BJ (cell line): ENCODE measurements at regions of chr3 and their contacts with region 1.

Region 1: DNA sequence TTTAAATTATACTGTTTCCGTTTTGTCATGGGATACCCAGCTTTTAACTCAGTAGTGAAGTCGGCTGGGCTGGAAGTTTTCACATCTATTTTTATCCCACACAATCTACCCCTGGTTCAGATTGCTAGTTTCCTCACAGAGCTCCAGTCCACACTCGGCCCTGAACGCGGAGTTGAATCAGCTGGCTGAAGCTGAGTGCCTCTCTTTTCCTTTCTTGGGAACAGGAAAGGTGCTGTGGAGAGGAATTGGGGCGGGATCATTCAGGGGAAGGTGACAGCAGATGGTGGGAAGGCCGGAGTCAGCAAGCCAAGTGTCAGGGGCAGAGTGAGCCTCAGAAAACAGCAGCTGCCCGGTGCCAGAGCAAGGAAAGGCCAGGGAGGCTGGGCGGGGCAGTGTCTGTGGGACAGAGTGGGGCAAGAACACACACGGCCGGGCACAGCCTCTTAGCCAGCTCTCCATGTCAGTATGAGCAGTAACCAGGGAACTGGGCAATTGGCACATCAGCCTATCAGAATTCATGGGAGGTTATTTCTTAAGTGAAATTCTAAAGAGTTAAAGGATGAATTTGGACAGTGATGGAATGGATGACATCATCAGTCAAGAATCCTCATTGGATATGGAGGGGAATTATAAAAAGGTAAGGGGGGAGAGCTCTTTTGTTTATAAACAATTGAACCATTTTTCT is 135.7 kb upstream of the IL12A start:
- DNase-seq: no peak
- H3K4me3 ChIP-seq: peak overlapping the region; percentile 26
- H3K27me3 ChIP-seq: no peaks in the 10 kb centered on the region
- CTCF ChIP-seq: no peak

Region 2: DNA sequence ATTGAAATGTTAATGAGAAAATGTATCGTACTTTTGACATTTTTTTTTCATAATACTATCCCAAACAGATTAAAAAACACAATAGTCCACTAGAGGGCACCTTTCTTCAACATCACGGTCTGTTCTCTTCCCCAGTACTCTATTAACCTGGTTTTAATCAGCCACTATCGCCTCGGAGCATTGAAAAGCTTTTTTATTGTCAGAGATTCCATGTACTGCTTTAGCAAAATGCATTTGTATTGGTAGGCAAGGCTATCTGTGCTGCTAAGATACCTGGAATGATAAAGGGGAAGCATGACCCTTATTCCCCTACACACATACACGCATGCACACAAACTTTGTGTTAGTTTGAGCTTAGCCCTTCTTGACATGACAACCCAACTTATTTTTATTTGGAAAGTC is 24.4 kb before region 1 on chr3:
- CTCF ChIA-PET with region 1: interaction called, 32 read pairs
- POLR2A ChIA-PET with region 1: interaction called, 4 read pairs
- DNase-seq: no peak
- H3K4me3 ChIP-seq: no peak overlapping the region
- H3K27me3 ChIP-seq: no peaks in the 10 kb centered on the region
- CTCF ChIP-seq: peak; percentile 36

Region 3: GRCh38 chr3:159929435-159930141 is 76.6 kb after region 1 on chr3:
- CTCF ChIA-PET with region 1: no interaction called
- POLR2A ChIA-PET with region 1: no interaction called
- DNase-seq: no peak
- H3K4me3 ChIP-seq: no peak overlapping the region
- H3K27me3 ChIP-seq: no peaks in the 10 kb centered on the region
- CTCF ChIP-seq: peak; percentile 56